ENCODE measurements at regions of chr2 and their contacts with region 1.

Region 1: DNA sequence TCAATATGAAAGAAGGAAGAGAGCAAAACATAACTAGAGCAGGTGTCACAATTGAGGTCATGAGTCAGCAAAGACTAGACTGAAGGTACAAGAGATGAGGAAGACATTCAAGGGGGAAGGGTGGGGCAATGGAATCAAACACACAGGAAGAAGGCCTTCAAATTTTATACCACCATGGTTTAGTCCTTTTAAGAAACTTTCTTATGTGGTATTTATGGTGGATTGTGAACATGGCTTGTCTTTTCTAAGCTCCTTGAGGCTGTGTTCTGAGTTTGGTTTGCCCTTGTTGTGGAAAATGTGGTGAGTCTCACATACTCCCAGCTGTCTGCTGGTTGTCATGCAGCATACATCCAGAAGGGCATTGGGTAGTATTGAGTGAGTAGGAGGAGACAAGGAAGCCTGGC is 62.1 kb downstream of the NABP1 start:
- DNase-seq: peak; percentile 91
- H3K4me3 Mint-ChIP-seq: peak overlapping the region; percentile 16
- H3K27ac Mint-ChIP-seq: peak overlapping the region; percentile 82
- H3K4me1 Mint-ChIP-seq: peaks cover 13% of the 10 kb centered on the region
- H3K27me3 Mint-ChIP-seq: peaks cover 30% of the 10 kb centered on the region

Region 2: DNA sequence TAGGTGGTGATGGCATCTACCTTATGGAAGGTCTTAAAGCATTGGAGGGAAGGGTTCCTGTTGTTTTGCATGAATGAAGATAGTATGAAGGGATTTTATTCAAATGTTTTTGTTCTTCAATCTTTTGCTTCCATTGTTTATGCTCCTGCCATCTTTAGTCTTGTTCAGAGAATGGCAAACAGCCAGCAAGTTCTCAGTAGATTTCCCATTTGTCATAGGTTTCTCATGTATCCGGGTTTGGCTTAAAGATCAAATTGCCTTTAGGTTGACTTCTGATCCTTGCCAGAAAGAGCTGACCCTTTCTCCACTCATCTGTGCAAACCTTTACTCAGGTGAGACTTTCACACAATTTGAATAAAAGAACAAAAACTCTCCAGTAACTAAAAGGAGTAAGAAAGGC is 545.0 kb before region 1 on chr2:
- intact Hi-C with region 1: loop called (anchors 2 kb)
- DNase-seq: peak; percentile 48
- H3K4me3 Mint-ChIP-seq: no peak overlapping the region
- H3K27ac Mint-ChIP-seq: peak overlapping the region; percentile 94
- H3K4me1 Mint-ChIP-seq: peaks cover 33% of the 10 kb centered on the region
- H3K27me3 Mint-ChIP-seq: no peaks in the 10 kb centered on the region

Measured in activated CD4-positive, alpha-beta T cell treated with anti-CD3 and anti-CD28 coated beads, Interleukin-2, amount 10 ng/mL, durations not matched to agents 24 days and 14 days (primary cell).